Activated CD4-positive, alpha-beta T cell treated with anti-CD3 and anti-CD28 coated beads for 36 hours (primary cell): ENCODE measurements at regions of chr4 and their contacts with region 1.

Region 1: DNA sequence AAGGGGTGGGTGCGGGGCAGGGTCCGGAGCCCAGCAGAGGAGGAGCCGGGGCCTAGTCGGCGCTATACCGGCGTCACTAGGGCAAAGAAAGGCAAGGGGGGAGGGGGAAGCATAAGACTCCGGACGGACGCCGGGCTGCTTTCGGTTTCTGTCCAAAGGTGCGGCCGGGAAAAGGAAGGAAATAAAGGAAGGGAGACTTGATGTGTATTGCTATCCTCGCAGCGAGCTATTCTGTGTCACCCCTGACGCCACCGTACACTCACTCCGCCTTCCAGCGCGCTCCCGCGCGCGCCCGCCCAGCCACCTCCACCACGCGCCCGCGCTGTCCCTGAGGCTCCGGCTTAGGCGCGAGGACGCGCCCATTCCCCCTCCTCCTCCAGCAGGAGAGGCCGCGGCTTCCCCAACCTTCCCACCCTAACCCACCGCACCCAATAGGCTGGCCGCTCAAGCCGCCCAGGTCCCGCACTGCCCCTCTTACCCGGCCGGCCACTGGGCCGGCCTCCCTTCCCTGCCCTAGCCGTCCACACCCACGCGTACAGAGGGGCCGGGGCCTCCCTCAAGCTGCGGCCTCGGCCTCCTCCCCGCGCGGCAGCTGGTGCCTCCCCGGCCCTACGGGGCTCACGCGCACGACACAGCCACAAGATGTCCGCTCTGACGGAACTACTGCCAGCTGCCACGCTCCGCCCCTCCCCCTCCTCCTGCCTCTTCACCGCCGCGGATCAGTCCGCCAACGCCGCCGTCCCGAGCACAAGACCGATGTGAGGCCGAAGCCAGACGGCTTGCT is at the start of gene UBE2D3:
- DNase-seq: peak; percentile 97
- ATAC-seq: peak; percentile 46
- H3K4me3 Mint-ChIP-seq: no peak within 1 kb of the TSS
- H3K27ac Mint-ChIP-seq: no peak within 1 kb of the TSS
- H3K4me1 Mint-ChIP-seq: peaks cover 23% of the 10 kb centered on the region
- H3K27me3 Mint-ChIP-seq: no peaks in the 10 kb centered on the region
- total RNA-seq, gene UBE2D3: 472 to 686 TPM

Region 2: GRCh38 chr4:101464607-101465006 is 1362.5 kb before region 1 on chr4:
- CTCF ChIA-PET with region 1: no interaction called
- POLR2A ChIA-PET with region 1: no interaction called
- intact Hi-C with region 1: no loop called
- DNase-seq: no peak
- ATAC-seq: no peak
- H3K4me3 Mint-ChIP-seq: no peak overlapping the region
- H3K27ac Mint-ChIP-seq: no peak overlapping the region
- H3K4me1 Mint-ChIP-seq: no peaks in the 10 kb centered on the region
- H3K27me3 Mint-ChIP-seq: peaks cover 19% of the 10 kb centered on the region

Region 3: GRCh38 chr4:102430461-102430910 is 396.6 kb before region 1 on chr4:
- CTCF ChIA-PET with region 1: interaction called, 3 read pairs
- POLR2A ChIA-PET with region 1: no interaction called
- intact Hi-C with region 1: loop called (anchors 2 to 5 kb)
- DNase-seq: no peak
- ATAC-seq: no peak
- H3K4me3 Mint-ChIP-seq: peak overlapping the region; percentile 81
- H3K27ac Mint-ChIP-seq: peak overlapping the region; percentile 87
- H3K4me1 Mint-ChIP-seq: peaks cover 12% of the 10 kb centered on the region
- H3K27me3 Mint-ChIP-seq: peaks cover 5% of the 10 kb centered on the region

Region 4: GRCh38 chr4:102620697-102621497 is 206.2 kb before region 1 on chr4:
- CTCF ChIA-PET with region 1: no interaction called
- POLR2A ChIA-PET with region 1: no interaction called
- intact Hi-C with region 1: loop called (anchors 5 kb)
- DNase-seq: peak; percentile 30
- ATAC-seq: peak; percentile 25
- H3K4me3 Mint-ChIP-seq: no peak overlapping the region
- H3K27ac Mint-ChIP-seq: peak overlapping the region; percentile 47
- H3K4me1 Mint-ChIP-seq: peaks cover 50% of the 10 kb centered on the region
- H3K27me3 Mint-ChIP-seq: no peaks in the 10 kb centered on the region

Region 5: DNA sequence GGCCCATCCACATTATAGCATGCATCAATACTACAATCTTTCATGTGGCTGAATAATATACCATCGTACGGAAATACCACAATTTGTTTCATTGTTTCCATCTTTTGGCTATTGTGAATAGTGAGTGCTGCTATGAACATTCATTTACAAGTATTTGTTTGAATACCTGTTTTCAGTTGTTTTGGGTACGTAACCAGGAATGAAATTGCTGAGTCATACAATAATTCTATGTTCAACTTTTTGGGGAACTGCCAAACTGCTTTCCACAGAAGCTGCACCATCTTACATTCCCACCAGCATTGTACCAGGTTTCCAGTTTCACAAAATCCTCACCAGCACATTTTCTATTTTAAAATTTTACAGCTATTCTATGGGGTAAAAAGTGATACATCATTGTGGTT is 37.8 kb before region 1 on chr4:
- CTCF ChIA-PET with region 1: interaction called, 4 read pairs
- POLR2A ChIA-PET with region 1: interaction called, 4 read pairs
- intact Hi-C with region 1: loop called in 1 of 2 experiments (anchors 1 kb)
- DNase-seq: no peak
- ATAC-seq: peak; percentile 63
- H3K4me3 Mint-ChIP-seq: no peak overlapping the region
- H3K27ac Mint-ChIP-seq: peak overlapping the region; percentile 25
- H3K4me1 Mint-ChIP-seq: peaks cover 33% of the 10 kb centered on the region
- H3K27me3 Mint-ChIP-seq: no peaks in the 10 kb centered on the region

Region 6: GRCh38 chr4:103008875-103009729 is 182.0 kb after region 1 on chr4:
- CTCF ChIA-PET with region 1: interaction called, 4 read pairs
- POLR2A ChIA-PET with region 1: no interaction called
- intact Hi-C with region 1: loop called in 1 of 2 experiments (anchors 2 kb)
- DNase-seq: no peak
- ATAC-seq: peak; percentile 95
- H3K4me3 Mint-ChIP-seq: no peak overlapping the region
- H3K27ac Mint-ChIP-seq: no peak overlapping the region
- H3K4me1 Mint-ChIP-seq: no peaks in the 10 kb centered on the region
- H3K27me3 Mint-ChIP-seq: peaks cover 2% of the 10 kb centered on the region

Region 7: GRCh38 chr4:103099691-103100392 is 272.8 kb after region 1 on chr4 and contains the start of gene BDH2:
- CTCF ChIA-PET with region 1: no interaction called
- POLR2A ChIA-PET with region 1: no interaction called
- intact Hi-C with region 1: loop called (anchors 1 to 5 kb)
- DNase-seq: peak; percentile 55
- ATAC-seq: peak; percentile 98
- H3K4me3 Mint-ChIP-seq: peak within 1 kb of the TSS; percentile 74
- H3K27ac Mint-ChIP-seq: peak within 1 kb of the TSS; percentile 85
- H3K4me1 Mint-ChIP-seq: peaks cover 18% of the 10 kb centered on the region
- H3K27me3 Mint-ChIP-seq: no peaks in the 10 kb centered on the region
- total RNA-seq, gene BDH2: 12.7 to 14.8 TPM

Region 8: DNA sequence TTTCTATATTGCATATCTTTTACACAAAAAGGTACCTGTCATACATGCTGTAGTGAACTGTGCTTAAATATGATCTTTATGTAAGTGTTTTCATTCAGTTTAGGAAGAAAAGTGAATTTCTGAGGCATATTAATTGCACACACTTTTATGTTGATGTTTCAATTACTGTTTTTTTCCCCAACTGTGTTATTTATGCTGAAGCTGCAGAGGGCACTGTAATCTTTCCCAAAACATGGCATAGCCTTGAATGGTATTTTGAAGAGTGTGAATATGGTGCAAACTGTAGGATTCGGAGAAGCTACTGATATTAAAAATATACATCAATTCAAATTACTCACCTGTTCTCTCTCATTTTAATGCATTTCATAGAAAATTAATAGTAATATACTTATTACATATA is 377.0 kb after region 1 on chr4:
- CTCF ChIA-PET with region 1: no interaction called
- POLR2A ChIA-PET with region 1: no interaction called
- intact Hi-C with region 1: no loop called
- DNase-seq: no peak
- ATAC-seq: no peak
- H3K4me3 Mint-ChIP-seq: no peak overlapping the region
- H3K27ac Mint-ChIP-seq: no peak overlapping the region
- H3K4me1 Mint-ChIP-seq: no peaks in the 10 kb centered on the region
- H3K27me3 Mint-ChIP-seq: peaks cover 7% of the 10 kb centered on the region